Mammary epithelial cell (primary cell): ENCODE measurements at regions of chr17 and their contacts with region 1.

Region 1: GRCh38 chr17:44218344-44219107 is 949 bp downstream of the UBTF start:
- DNase-seq: peak; percentile 90
- H3K4me3 ChIP-seq: peak overlapping the region; percentile 48 to 86 (median 84)
- H3K27ac ChIP-seq: peak overlapping the region; percentile 44
- H3K4me1 ChIP-seq: peaks cover 32% of the 10 kb centered on the region
- H3K27me3 ChIP-seq: no peaks in the 10 kb centered on the region
- CTCF ChIP-seq: peak in 1 of 2 donors; percentile 61

Region 2: GRCh38 chr17:44186307-44187130 is 32.0 kb before region 1 on chr17 and contains the start of gene TMUB2:
- CTCF ChIA-PET with region 1: no interaction called
- dilution Hi-C with region 1: no loop called
- in situ Hi-C with region 1: no loop called
- intact Hi-C with region 1: loop called (anchors 1 kb)
- DNase-seq: peak; percentile 99
- H3K4me3 ChIP-seq: peak within 1 kb of the TSS; percentile 87 to 96 (median 95)
- H3K27ac ChIP-seq: peak within 1 kb of the TSS; percentile 97
- H3K4me1 ChIP-seq: peaks cover 10% of the 10 kb centered on the region
- H3K27me3 ChIP-seq: no peaks in the 10 kb centered on the region
- CTCF ChIP-seq: no peak
- total RNA-seq, gene TMUB2: 25.2 to 31.8 TPM

Region 3: GRCh38 chr17:44235583-44235936 is 17.0 kb after region 1 on chr17:
- CTCF ChIA-PET with region 1: interaction called, 5 read pairs
- dilution Hi-C with region 1: no loop called
- in situ Hi-C with region 1: no loop called
- intact Hi-C with region 1: loop called (anchors 1 kb)
- DNase-seq: peak; percentile 91
- H3K4me3 ChIP-seq: no peak overlapping the region
- H3K27ac ChIP-seq: peak overlapping the region; percentile 55
- H3K4me1 ChIP-seq: peaks cover 22% of the 10 kb centered on the region
- H3K27me3 ChIP-seq: no peaks in the 10 kb centered on the region
- CTCF ChIP-seq: no peak

Region 4: GRCh38 chr17:44324571-44325275 is 106.2 kb after region 1 on chr17 and contains the start of gene SLC25A39:
- CTCF ChIA-PET with region 1: interaction called, 8 read pairs
- dilution Hi-C with region 1: no loop called
- in situ Hi-C with region 1: loop called in 1 of 2 experiments (anchors 5 kb)
- intact Hi-C with region 1: loop called (anchors 1 kb)
- DNase-seq: peak; percentile 92
- H3K4me3 ChIP-seq: peak within 1 kb of the TSS; percentile 77 to 85 (median 83)
- H3K27ac ChIP-seq: peak within 1 kb of the TSS; percentile 73
- H3K4me1 ChIP-seq: peaks cover 8% of the 10 kb centered on the region
- H3K27me3 ChIP-seq: no peaks in the 10 kb centered on the region
- CTCF ChIP-seq: no peak
- total RNA-seq, gene SLC25A39: 116 to 169 TPM

Region 5: DNA sequence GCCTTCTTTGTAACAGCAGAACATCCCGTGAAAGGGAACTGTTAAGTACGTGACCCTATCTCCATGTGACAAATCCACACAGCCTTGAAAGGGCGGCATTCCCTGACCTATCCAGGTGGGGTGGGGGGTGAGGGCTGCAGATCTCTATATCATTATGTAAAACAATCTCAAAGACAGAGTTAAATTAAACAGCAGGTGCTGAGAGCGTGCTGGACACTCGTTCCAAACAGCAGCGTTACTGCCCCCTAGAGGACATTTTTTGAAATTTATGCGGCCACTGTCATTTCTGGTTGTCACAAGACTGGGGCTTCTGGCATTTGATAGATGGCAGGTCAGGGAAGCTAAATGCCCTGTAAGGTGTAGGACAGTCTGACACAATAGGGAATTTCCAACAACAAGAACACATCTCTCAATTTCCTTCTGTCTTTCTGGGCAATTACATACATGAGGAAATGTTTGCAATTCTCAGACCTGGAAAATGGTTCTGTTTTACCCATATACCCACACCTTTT is 112.8 kb after region 1 on chr17:
- CTCF ChIA-PET with region 1: interaction called, 8 read pairs
- dilution Hi-C with region 1: no loop called
- in situ Hi-C with region 1: loop called in 1 of 2 experiments (anchors 5 kb)
- intact Hi-C with region 1: no loop called
- DNase-seq: peak; percentile 53
- H3K4me3 ChIP-seq: no peak overlapping the region
- H3K27ac ChIP-seq: no peak overlapping the region
- H3K4me1 ChIP-seq: no peaks in the 10 kb centered on the region
- H3K27me3 ChIP-seq: no peaks in the 10 kb centered on the region
- CTCF ChIP-seq: peak; percentile 79 to 82